Activated CD4-positive, alpha-beta T cell treated with anti-CD3 and anti-CD28 coated beads, Interleukin-2, amount 10 ng/mL, durations not matched to agents 24 days and 14 days (primary cell): ENCODE measurements at regions of chr2 and their contacts with region 1.

Region 1: GRCh38 chr2:101717071-101717845 is 19.8 kb downstream of the MAP4K4 start:
- DNase-seq: peak; percentile 81
- H3K4me3 Mint-ChIP-seq: peak overlapping the region; percentile 31
- H3K27ac Mint-ChIP-seq: peak overlapping the region; percentile 90
- H3K4me1 Mint-ChIP-seq: peaks cover 58% of the 10 kb centered on the region
- H3K27me3 Mint-ChIP-seq: no peaks in the 10 kb centered on the region

Region 2: GRCh38 chr2:101697124-101698013 is 19.9 kb before region 1 on chr2 and contains the start of gene MAP4K4:
- intact Hi-C with region 1: loop called (anchors 1 kb)
- DNase-seq: peak; percentile 91
- H3K4me3 Mint-ChIP-seq: peak within 1 kb of the TSS; percentile 85
- H3K27ac Mint-ChIP-seq: peak within 1 kb of the TSS; percentile 88
- H3K4me1 Mint-ChIP-seq: peaks cover 22% of the 10 kb centered on the region
- H3K27me3 Mint-ChIP-seq: no peaks in the 10 kb centered on the region
- total RNA-seq, gene MAP4K4: 41.2 and 42.6 TPM in 2 replicates

Region 3: DNA sequence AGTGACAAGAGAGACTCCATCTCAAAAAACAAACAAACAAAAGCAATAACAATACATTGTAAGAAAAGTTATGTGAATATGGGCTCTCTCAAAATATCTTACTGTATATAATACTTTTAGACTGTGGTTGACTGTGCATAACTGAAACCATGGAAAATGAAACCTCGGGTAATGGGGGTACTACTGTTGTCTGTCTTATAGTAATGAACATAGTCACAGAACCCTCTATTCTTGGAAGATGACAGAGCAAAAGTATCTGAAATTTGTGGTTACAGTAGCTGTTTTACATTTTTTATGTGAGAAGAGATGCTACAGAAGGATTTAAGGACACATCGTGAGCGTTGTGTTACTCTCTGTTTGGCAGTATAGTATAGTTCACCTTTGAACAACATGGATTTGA is 40.7 kb after region 1 on chr2:
- intact Hi-C with region 1: loop called (anchors 1 kb)
- DNase-seq: no peak
- H3K4me3 Mint-ChIP-seq: peak overlapping the region; percentile 32
- H3K27ac Mint-ChIP-seq: peak overlapping the region; percentile 10
- H3K4me1 Mint-ChIP-seq: peaks cover 38% of the 10 kb centered on the region
- H3K27me3 Mint-ChIP-seq: no peaks in the 10 kb centered on the region

Region 4: GRCh38 chr2:101770726-101771125 is 53.5 kb after region 1 on chr2:
- intact Hi-C with region 1: no loop called
- DNase-seq: no peak
- H3K4me3 Mint-ChIP-seq: no peak overlapping the region
- H3K27ac Mint-ChIP-seq: no peak overlapping the region
- H3K4me1 Mint-ChIP-seq: peaks cover 65% of the 10 kb centered on the region
- H3K27me3 Mint-ChIP-seq: no peaks in the 10 kb centered on the region

Region 5: GRCh38 chr2:101781326-101781725 is 64.1 kb after region 1 on chr2:
- intact Hi-C with region 1: no loop called
- DNase-seq: no peak
- H3K4me3 Mint-ChIP-seq: no peak overlapping the region
- H3K27ac Mint-ChIP-seq: no peak overlapping the region
- H3K4me1 Mint-ChIP-seq: peaks cover 41% of the 10 kb centered on the region
- H3K27me3 Mint-ChIP-seq: no peaks in the 10 kb centered on the region